AG04449 (cell line): ENCODE measurements at regions of chr1 and their contacts with region 1.

Region 1: GRCh38 chr1:183655562-183656075 is 2.5 kb upstream of the APOBEC4 start:
- DNase-seq: no peak
- H3K4me3 ChIP-seq: no peak overlapping the region
- CTCF ChIP-seq: peak; percentile 78

Region 2: DNA sequence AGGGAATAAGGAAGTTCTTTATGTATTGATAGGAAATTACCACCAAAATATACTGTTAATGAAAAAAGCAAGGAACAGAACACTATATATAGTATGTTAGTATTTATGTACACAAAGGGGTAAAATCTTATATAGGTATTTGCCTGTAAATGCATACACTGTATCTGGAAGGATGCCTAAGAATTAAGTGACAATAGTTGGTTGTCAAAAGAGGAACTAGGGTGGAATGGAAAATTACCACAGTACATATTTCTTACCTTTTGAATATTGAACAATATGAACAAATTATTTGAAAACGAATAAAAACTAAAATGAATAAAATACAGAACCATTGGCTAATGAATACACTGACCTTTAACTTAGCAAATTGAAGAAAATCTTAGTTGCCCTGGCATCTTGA is 33.6 kb before region 1 on chr1:
- CTCF ChIA-PET with region 1: no interaction called
- POLR2A ChIA-PET with region 1: no interaction called
- DNase-seq: no peak
- H3K4me3 ChIP-seq: no peak overlapping the region
- CTCF ChIP-seq: no peak

Region 3: GRCh38 chr1:183633633-183634343 is 21.8 kb before region 1 on chr1:
- CTCF ChIA-PET with region 1: interaction called, 15 read pairs
- POLR2A ChIA-PET with region 1: no interaction called
- DNase-seq: peak; percentile 83
- H3K4me3 ChIP-seq: peak overlapping the region; percentile 84
- CTCF ChIP-seq: peak; percentile 47

Region 4: DNA sequence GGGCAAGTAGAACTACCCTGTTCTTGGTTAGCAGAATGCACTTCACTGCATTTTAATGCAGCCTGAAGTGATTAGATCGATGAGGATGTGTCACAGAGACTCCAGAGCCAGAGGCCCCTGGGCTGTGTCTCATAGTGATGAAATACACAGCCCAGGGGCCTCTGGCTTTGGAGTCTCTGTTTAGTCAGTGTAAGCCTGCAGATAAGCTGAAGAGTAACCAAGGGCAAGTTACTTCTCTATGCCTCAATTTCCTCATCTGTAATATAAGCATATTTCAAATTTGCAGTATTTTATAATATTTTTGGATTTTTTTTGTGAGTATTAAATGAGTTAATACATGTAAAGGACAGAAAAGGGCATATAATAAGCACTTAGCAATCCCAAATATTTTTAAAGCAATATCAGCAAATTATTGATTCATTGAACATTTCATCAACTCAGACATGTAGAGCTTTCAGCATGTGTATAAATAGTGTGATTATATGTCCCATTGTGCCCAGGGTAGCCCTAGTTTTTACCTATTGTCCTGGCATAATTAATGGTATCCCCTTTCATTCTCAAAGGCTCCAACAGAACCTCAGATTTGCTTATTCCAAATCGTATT is 21.1 kb after region 1 on chr1:
- CTCF ChIA-PET with region 1: interaction called, 46 read pairs
- POLR2A ChIA-PET with region 1: no interaction called
- DNase-seq: no peak
- H3K4me3 ChIP-seq: no peak overlapping the region
- CTCF ChIP-seq: no peak

Region 5: DNA sequence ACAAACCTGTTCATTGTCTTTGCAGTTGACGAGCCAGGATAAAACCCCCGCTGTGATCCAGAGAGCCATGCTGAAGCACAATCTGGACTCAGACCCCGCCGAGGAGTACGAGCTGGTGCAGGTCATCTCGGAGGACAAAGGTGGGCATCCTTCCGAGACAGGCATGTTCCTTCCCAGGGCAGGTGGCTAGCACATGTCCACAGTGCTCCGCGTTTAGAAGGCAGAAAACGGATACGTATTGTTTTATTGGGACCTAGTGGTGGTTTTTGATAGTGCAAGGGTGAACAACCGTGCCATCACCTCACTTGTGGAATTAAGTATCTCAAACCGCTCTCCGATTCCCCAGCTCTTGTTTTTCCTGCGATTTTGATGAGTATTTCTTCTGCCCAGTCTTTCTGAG is 266.6 kb after region 1 on chr1:
- CTCF ChIA-PET with region 1: interaction called, 284 read pairs
- POLR2A ChIA-PET with region 1: no interaction called
- DNase-seq: no peak
- H3K4me3 ChIP-seq: no peak overlapping the region
- CTCF ChIP-seq: no peak

Region 6: GRCh38 chr1:183942933-183943693 is 287.5 kb after region 1 on chr1:
- CTCF ChIA-PET with region 1: interaction called, 11 read pairs
- POLR2A ChIA-PET with region 1: no interaction called
- DNase-seq: peak; percentile 97
- H3K4me3 ChIP-seq: peak overlapping the region; percentile 26; the same call in 1 of the 2 replicates
- CTCF ChIP-seq: peak; percentile 43